Stomach (tissue), 19 donors: ENCODE measurements at regions of chr1 and their contacts with region 1.

Region 1: GRCh38 chr1:172719694-172720138 is 60.8 kb downstream of the FASLG start:
- DNase-seq: peak in 1 of 2 donors; percentile 69
- H3K4me3 ChIP-seq: no peak overlapping the region
- H3K27ac ChIP-seq: no peak overlapping the region
- H3K4me1 ChIP-seq: peaks cover 0 to 13% (median 6%) of the 10 kb centered on the region in 4 donors
- H3K27me3 ChIP-seq: no peaks in the 10 kb centered on the region
- CTCF ChIP-seq: peak in 5 of 7 experiments; percentile 67 to 80 (median 71)
- EP300 ChIP-seq: no peak
- POLR2A ChIP-seq: no peak

Region 2: GRCh38 chr1:172443626-172444453 is 275.9 kb before region 1 on chr1 and contains the start of gene PIGC:
- intact Hi-C with region 1: loop called (anchors 10 kb)
- DNase-seq: peak; percentile 91 to 97
- H3K4me3 ChIP-seq: peak within 1 kb of the TSS; percentile 66 to 90 (median 75)
- H3K27ac ChIP-seq: peak within 1 kb of the TSS; percentile 67 to 87 (median 79)
- H3K4me1 ChIP-seq: peaks cover 10 to 35% (median 27%) of the 10 kb centered on the region in 4 donors
- H3K27me3 ChIP-seq: no peaks in the 10 kb centered on the region
- CTCF ChIP-seq: peak in 5 of 7 experiments; percentile 75 to 88 (median 80)
- EP300 ChIP-seq: no peak
- POLR2A ChIP-seq: no peak
- total RNA-seq, gene PIGC: 1.2 to 27.9 (median 17.9) TPM

Region 3: DNA sequence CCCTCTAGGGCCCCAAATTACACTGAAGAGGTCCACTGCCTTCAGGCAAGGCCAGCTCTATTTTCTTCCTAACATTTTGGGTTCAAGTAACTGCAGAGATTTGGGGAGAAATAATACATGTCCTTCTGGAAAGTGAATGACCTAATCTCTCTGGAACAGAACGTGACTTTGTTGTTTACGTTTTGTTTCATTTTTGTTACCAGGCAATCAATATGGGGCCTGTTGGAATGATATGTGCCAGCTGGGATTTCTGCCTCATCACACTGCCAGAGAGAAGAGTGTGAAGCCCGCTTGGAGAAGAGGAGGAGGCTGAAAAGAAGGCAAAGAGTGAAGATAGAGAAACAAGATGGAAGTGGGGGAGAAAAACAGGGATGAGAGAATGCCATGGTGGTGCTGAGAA is 55.9 kb after region 1 on chr1:
- intact Hi-C with region 1: no loop called
- DNase-seq: peak in 1 of 2 donors; percentile 6
- H3K4me3 ChIP-seq: no peak overlapping the region
- H3K27ac ChIP-seq: peak overlapping the region in 1 of 5 donors; percentile 32
- H3K4me1 ChIP-seq: no peaks in the 10 kb centered on the region
- H3K27me3 ChIP-seq: no peaks in the 10 kb centered on the region
- CTCF ChIP-seq: no peak
- EP300 ChIP-seq: no peak
- POLR2A ChIP-seq: no peak